ENCODE measurements at regions of chr5 and their contacts with region 1.

Region 1: GRCh38 chr5:81751009-81751835 is at the start of gene SSBP2:
- DNase-seq: peak; percentile 100
- H3K4me3 Mint-ChIP-seq: peak within 1 kb of the TSS; percentile 90
- H3K27ac Mint-ChIP-seq: peak within 1 kb of the TSS; percentile 93
- H3K4me1 Mint-ChIP-seq: peaks cover 12% of the 10 kb centered on the region
- H3K27me3 Mint-ChIP-seq: peaks cover 27% of the 10 kb centered on the region
- total RNA-seq, gene SSBP2: 13.1 and 13.4 TPM in 2 replicates

Region 2: DNA sequence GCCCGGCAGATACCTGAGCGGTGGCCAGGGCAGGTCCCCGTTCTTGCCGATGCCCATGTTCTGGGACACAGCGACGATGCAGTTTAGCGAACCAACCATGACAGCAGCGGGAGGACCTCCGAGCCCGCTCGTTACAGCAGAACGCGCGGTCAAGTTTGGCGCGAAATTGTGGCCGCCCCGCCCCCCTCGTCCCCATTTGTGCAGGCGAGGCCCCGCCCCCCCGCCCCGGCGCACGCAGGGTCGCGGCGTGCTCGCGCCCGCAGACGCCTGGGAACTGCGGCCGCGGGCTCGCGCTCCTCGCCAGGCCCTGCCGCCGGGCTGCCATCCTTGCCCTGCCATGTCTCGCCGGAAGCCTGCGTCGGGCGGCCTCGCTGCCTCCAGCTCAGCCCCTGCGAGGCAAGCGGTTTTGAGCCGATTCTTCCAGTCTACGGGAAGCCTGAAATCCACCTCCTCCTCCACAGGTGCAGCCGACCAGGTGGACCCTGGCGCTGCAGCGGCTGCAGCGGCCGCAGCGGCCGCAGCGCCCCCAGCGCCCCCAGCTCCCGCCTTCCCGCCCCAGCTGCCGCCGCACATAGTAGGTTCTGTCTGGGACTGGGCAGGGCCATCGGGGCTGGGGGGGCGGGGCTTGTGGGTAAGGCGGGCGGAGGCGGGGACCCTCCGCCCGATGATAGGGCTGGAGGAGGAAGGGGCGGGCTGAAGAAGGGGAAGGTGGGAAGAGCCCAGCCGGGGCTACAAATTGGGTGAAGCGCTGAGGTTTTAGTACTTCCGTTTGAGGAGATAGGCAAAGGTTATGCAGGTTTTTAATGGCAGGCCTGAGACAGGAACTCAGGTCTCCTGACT is 1096.6 kb before region 1 on chr5 and contains the starts of genes DHFR and MSH3:
- intact Hi-C with region 1: loop called (anchors 10 kb)
- DNase-seq: peak; percentile 96
- H3K4me3 Mint-ChIP-seq: peak within 1 kb of the TSS; percentile 84
- H3K27ac Mint-ChIP-seq: peak within 1 kb of the TSS; percentile 93
- H3K4me1 Mint-ChIP-seq: peaks cover 23% of the 10 kb centered on the region
- H3K27me3 Mint-ChIP-seq: no peaks in the 10 kb centered on the region
- total RNA-seq, gene DHFR: 66.5 and 73.4 TPM in 2 replicates
- total RNA-seq, gene MSH3: 21.0 and 21.1 TPM in 2 replicates

Region 3: DNA sequence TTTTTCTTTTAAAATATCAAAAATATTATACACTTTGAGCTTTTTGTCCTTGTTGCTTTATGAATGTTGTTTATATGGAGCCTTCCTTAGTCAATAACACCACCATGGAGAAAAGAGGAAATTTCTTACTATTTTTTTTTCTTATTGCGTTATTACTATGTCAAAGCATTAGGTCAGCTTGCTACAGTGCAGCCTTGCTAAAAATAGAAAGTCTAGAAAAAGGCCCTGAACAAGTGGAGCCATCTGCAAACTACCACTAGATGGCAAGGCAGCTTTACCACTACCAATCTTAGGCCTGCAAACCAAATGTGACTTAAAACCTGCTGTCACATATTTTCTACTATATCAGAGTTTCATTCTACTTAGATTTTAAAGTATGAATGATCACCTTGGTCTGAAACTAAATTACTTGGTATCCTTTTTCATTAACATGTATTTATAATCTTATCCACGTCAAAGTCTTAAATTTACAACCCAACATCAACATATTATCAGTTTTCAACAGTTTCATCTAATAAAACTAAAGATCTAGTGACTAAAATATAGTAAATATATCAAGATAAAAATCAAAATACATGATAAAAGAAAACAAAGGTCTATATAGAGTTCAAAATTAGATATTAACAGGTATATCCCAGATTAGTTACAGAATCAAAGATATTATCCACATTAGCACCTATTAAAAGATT is 244.2 kb before region 1 on chr5:
- intact Hi-C with region 1: loop called (anchors 1 kb)
- DNase-seq: peak; percentile 80
- H3K4me3 Mint-ChIP-seq: no peak overlapping the region
- H3K27ac Mint-ChIP-seq: no peak overlapping the region
- H3K4me1 Mint-ChIP-seq: peaks cover 6% of the 10 kb centered on the region
- H3K27me3 Mint-ChIP-seq: no peaks in the 10 kb centered on the region

Region 4: DNA sequence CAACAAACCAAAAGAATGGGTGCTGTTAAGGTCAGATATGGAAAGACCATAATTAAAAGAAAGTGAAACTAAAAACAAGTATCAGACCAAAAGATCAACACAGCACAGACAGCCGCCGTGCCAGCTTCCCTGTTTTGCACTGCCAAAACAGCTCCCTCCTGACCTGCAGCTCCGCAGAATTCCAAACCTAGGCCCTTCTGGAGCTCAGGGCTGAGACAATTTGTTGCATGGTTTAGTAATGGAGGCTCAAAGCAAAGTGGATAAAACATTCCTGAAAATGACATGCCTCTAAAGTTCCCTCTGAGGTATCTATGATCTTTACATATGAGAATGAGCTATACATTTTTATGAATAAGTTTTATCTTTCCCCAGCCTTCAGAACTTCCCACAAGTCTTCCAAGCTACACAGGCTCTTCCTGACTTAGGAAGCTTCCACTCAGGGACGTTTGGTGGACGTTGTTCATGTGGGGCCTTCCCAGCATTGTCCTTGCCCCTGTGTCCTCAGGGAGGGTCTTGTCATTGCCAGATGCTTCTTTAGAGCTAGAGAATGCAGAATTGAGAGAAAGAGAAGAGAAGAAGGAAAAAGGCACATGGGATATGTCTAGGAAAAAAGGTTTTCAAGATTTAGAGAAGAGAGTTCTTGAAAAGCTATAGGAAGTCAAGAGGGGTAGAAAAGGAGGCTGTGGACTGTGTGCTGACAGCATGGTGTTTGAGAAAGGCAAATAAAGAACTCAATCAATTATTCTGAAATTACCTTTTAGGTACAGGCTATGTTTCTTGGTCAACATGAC is 28.1 kb after region 1 on chr5:
- intact Hi-C with region 1: loop called (anchors 1 kb)
- DNase-seq: peak; percentile 81
- H3K4me3 Mint-ChIP-seq: peak overlapping the region; percentile 85
- H3K27ac Mint-ChIP-seq: peak overlapping the region; percentile 88
- H3K4me1 Mint-ChIP-seq: peaks cover 21% of the 10 kb centered on the region
- H3K27me3 Mint-ChIP-seq: peaks cover under 1% of the 10 kb centered on the region

Region 5: GRCh38 chr5:81971712-81972495 is 220.7 kb after region 1 on chr5 and contains the start of gene ATG10:
- intact Hi-C with region 1: loop called (anchors 1 kb)
- DNase-seq: peak; percentile 97
- H3K4me3 Mint-ChIP-seq: peak within 1 kb of the TSS; percentile 90
- H3K27ac Mint-ChIP-seq: peak within 1 kb of the TSS; percentile 96
- H3K4me1 Mint-ChIP-seq: peaks cover 25% of the 10 kb centered on the region
- H3K27me3 Mint-ChIP-seq: no peaks in the 10 kb centered on the region
- total RNA-seq, gene ATG10: 5.8 and 5.9 TPM in 2 replicates

Region 6: DNA sequence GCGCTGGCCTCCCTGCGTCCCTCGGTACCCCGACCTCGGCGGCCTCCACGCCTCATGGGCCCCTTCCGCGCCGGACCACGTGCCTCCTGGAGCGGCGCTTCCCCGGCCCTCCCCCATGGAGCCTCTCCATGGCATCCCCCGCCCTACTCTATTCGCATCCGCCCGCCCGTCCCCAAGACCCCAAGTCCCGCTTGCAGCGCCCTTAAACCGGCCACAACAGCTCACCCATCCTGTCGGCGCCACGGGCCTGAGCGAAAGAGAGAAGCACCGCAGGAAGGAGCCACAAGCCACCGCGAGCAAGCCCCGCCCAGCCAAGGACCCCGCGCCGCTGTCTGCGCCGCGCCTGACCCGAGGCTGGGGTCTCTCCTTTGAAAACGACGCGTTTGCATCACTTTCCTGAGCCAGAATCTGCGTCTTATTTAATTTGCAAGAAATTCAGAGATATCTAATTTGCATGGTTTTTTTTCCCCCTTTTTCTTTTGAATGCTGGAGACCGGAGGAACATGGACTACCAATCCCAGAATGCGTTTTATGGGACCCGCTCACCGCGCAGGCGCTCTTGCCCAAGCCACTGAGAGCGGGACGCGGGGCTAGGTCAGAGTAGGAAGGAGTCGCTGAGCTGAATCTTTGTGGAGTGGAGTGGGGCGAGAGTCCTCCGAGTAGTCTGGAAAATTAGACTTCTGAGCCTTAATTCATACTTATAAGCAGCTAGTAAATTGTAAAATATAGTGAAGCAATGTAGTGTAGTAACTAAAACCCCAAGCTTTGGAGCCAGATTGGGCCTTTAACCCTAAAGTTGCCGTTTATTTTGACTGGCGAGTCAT is 527.1 kb after region 1 on chr5 and contains the start of gene RPS23:
- intact Hi-C with region 1: loop called (anchors 5 kb)
- DNase-seq: peak; percentile 96
- H3K4me3 Mint-ChIP-seq: peak within 1 kb of the TSS; percentile 89
- H3K27ac Mint-ChIP-seq: peak within 1 kb of the TSS; percentile 98
- H3K4me1 Mint-ChIP-seq: peaks cover 32% of the 10 kb centered on the region
- H3K27me3 Mint-ChIP-seq: no peaks in the 10 kb centered on the region
- total RNA-seq, gene RPS23: 2,481 and 2,489 TPM in 2 replicates

Measured in activated CD4-positive, alpha-beta T cell treated with anti-CD3 and anti-CD28 coated beads, Interleukin-2, amount 10 ng/mL, durations not matched to agents 24 days and 14 days (primary cell).